PC-3 (cell line): ENCODE measurements at regions of chr1 and their contacts with region 1.

Region 1: DNA sequence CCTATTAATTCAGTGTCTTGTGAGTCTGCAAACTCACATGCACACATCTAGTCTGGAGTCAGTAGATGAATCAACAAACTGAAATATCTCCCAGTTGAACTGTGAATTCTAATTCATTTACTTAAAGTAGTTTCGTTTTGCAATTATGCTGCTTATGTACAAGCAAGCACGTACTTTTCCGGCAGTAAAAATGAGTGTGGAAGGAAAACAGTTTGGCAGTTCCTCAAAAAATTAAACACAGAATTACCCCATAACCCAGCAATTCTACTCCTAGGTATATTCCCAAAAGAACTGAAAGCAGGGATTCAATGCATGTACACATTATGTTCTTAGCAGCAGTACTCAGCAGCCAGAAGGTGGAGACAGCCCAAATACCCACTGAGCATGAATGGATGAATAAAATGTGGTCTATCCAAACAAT is 49.3 kb downstream of the GNB1 start:
- DNase-seq: no peak
- ATAC-seq: peak; percentile 41; the same call in 1 of the 2 replicates
- H3K4me3 ChIP-seq: no peak overlapping the region
- H3K27ac ChIP-seq: no peak overlapping the region
- H3K4me1 ChIP-seq: no peaks in the 10 kb centered on the region
- H3K27me3 ChIP-seq: no peaks in the 10 kb centered on the region
- CTCF ChIP-seq: 0 out of 2 replicates have a peak, but pooled peaks have one; percentile 17

Region 2: GRCh38 chr1:1852619-1853414 is 11.2 kb after region 1 on chr1:
- CTCF ChIA-PET with region 1: no interaction called
- POLR2A ChIA-PET with region 1: no interaction called
- intact Hi-C with region 1: loop called (anchors 1 kb)
- DNase-seq: no peak
- ATAC-seq: no peak
- H3K4me3 ChIP-seq: no peak overlapping the region
- H3K27ac ChIP-seq: peak overlapping the region; percentile 59
- H3K4me1 ChIP-seq: peaks cover 18% of the 10 kb centered on the region
- H3K27me3 ChIP-seq: no peaks in the 10 kb centered on the region
- CTCF ChIP-seq: no peak